ENCODE measurements at regions of chr1 and their contacts with region 1.

Region 1: GRCh38 chr1:178367151-178367550 is 129.6 kb downstream of the CLEC20A start:
- DNase-seq: no peak
- ATAC-seq: no peak
- H3K4me3 ChIP-seq: no peak overlapping the region
- H3K27ac ChIP-seq: no peak overlapping the region
- H3K4me1 ChIP-seq: no peaks in the 10 kb centered on the region
- H3K27me3 ChIP-seq: no peaks in the 10 kb centered on the region
- CTCF ChIP-seq: no peak
- POLR2A ChIP-seq: no peak
- RAD21 ChIP-seq: no peak

Region 2: DNA sequence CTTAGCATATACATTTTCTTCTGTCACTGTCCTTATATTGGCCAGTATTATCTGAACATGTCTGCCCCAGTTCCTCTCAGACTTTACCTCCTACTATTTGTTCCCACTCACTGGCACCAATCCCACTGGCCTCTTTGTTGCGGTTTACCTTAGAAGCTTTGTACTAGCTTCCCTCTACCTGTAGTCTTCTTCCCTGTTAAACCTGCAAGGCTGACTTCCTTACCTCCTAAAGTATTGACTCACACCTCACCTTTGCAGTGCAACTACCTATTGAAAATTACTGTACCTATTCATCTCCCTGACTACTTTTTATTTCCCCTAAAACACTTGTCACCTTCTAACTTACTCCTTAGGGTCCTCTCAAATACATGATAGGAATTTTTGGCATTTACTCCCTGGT is 18.5 kb after region 1 on chr1:
- CTCF ChIA-PET with region 1: no interaction called
- POLR2A ChIA-PET with region 1: no interaction called
- RAD21 ChIA-PET with region 1: no interaction called
- intact Hi-C with region 1: loop called (anchors 2 kb)
- DNase-seq: no peak
- ATAC-seq: no peak
- H3K4me3 ChIP-seq: no peak overlapping the region
- H3K27ac ChIP-seq: no peak overlapping the region
- H3K4me1 ChIP-seq: no peaks in the 10 kb centered on the region
- H3K27me3 ChIP-seq: no peaks in the 10 kb centered on the region
- CTCF ChIP-seq: no peak
- POLR2A ChIP-seq: no peak
- RAD21 ChIP-seq: no peak